IMR-90 (cell line): ENCODE measurements at regions of chr19 and their contacts with region 1.

Region 1: DNA sequence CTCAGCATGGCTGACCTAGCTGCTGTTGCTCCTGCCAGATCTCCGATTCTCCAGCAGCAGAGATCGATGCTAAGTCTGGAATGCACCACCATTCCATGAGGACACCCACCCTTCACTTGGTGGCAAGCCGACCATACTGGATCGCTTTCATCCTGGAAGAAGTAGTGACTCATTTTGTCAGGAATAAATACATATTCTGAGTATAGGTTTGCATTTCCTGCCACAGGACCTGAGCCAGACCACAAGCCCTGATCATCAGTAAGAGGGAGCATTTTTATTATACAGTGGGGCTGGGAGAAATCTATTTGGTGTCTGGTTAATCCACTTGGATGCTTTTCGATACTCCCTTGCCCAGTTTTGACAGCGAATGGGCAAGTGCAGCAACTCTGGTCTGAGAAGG is 10.9 kb upstream of the KCTD15 start:
- DNase-seq: peak; percentile 70
- ATAC-seq: peak; percentile 76
- H3K4me3 ChIP-seq: no peak overlapping the region
- H3K27ac ChIP-seq: no peak overlapping the region
- H3K4me1 ChIP-seq: peaks cover 6% of the 10 kb centered on the region
- H3K27me3 ChIP-seq: peaks cover 3% of the 10 kb centered on the region
- CTCF ChIP-seq: no peak
- POLR2A ChIP-seq: no peak
- RAD21 ChIP-seq: no peak

Region 2: GRCh38 chr19:33891766-33892165 is 106.0 kb after region 1 on chr19:
- CTCF ChIA-PET with region 1: no interaction called
- POLR2A ChIA-PET with region 1: interaction called, 13 read pairs
- dilution Hi-C with region 1: no loop called
- in situ Hi-C with region 1: no loop called
- intact Hi-C with region 1: no loop called
- DNase-seq: no peak
- ATAC-seq: no peak
- H3K4me3 ChIP-seq: no peak overlapping the region
- H3K27ac ChIP-seq: no peak overlapping the region
- H3K4me1 ChIP-seq: no peaks in the 10 kb centered on the region
- H3K27me3 ChIP-seq: peaks cover 2% of the 10 kb centered on the region; the same call in 1 of the 2 replicates
- CTCF ChIP-seq: no peak
- POLR2A ChIP-seq: no peak
- RAD21 ChIP-seq: no peak